Thyroid gland (tissue), 4 donors: ENCODE measurements at regions of chr18 and their contacts with region 1.

Region 1: DNA sequence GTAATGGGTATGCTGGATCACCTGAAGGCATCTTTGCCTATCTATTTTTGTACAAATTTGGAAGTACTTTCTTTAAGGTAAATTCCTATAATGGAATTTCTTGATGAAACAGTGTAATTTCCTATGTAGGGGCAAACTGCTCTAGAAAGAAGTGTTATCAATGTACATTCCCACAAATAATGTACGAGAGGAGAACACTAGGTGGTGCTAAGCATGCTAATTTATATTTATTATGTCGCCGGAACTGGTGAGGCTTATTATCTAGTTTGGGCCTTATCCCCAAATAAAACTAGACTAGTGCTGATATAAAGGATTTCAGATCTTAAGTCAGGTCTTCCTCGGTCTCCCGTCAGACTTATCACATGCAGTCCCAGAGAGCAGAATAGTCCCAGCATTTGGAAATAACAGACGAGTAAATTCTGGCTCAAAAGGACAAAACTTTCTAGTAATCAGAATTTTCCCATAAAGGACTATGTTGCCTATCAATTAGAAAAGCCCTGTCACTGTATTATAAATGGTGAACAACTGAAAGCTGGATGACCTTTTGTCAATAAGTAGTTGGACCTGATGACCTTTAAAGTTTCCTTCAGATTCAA is 86.9 kb upstream of the RBBP8 start:
- DNase-seq: no peak
- H3K4me3 ChIP-seq: no peak overlapping the region
- H3K27ac ChIP-seq: peak overlapping the region; percentile 19 to 48 (median 35)
- H3K4me1 ChIP-seq: peaks cover 10 to 18% of the 10 kb centered on the region in 2 donors
- H3K27me3 ChIP-seq: no peaks in the 10 kb centered on the region
- CTCF ChIP-seq: peak in 4 of 6 experiments; percentile 29 to 67 (median 60)
- POLR2A ChIP-seq: no peak

Region 2: GRCh38 chr18:22789600-22789999 is 56.6 kb before region 1 on chr18:
- intact Hi-C with region 1: no loop called
- DNase-seq: no peak
- H3K4me3 ChIP-seq: no peak overlapping the region
- H3K27ac ChIP-seq: no peak overlapping the region
- H3K4me1 ChIP-seq: no peaks in the 10 kb centered on the region
- H3K27me3 ChIP-seq: no peaks in the 10 kb centered on the region
- CTCF ChIP-seq: no peak
- POLR2A ChIP-seq: no peak

Region 3: GRCh38 chr18:22933206-22933957 is 87.2 kb after region 1 on chr18 and contains the start of gene RBBP8:
- intact Hi-C with region 1: loop called (anchors 10 kb)
- DNase-seq: peak; percentile 80 to 84
- H3K4me3 ChIP-seq: peak within 1 kb of the TSS; percentile 16 to 100 (median 69)
- H3K27ac ChIP-seq: peak within 1 kb of the TSS; percentile 84 to 97 (median 88)
- H3K4me1 ChIP-seq: peaks cover 12% of the 10 kb centered on the region in 2 donors
- H3K27me3 ChIP-seq: no peaks in the 10 kb centered on the region
- CTCF ChIP-seq: no peak
- POLR2A ChIP-seq: peak; percentile 27 to 78
- total RNA-seq, gene RBBP8: 29.2 to 51.3 (median 42.5) TPM

Region 4: GRCh38 chr18:23020555-23021294 is 174.5 kb after region 1 on chr18:
- intact Hi-C with region 1: no loop called
- DNase-seq: no peak
- H3K4me3 ChIP-seq: no peak overlapping the region
- H3K27ac ChIP-seq: no peak overlapping the region
- H3K4me1 ChIP-seq: no peaks in the 10 kb centered on the region
- H3K27me3 ChIP-seq: no peaks in the 10 kb centered on the region
- CTCF ChIP-seq: no peak
- POLR2A ChIP-seq: no peak